ENCODE measurements at regions of chr15 and their contacts with region 1.

Region 1: DNA sequence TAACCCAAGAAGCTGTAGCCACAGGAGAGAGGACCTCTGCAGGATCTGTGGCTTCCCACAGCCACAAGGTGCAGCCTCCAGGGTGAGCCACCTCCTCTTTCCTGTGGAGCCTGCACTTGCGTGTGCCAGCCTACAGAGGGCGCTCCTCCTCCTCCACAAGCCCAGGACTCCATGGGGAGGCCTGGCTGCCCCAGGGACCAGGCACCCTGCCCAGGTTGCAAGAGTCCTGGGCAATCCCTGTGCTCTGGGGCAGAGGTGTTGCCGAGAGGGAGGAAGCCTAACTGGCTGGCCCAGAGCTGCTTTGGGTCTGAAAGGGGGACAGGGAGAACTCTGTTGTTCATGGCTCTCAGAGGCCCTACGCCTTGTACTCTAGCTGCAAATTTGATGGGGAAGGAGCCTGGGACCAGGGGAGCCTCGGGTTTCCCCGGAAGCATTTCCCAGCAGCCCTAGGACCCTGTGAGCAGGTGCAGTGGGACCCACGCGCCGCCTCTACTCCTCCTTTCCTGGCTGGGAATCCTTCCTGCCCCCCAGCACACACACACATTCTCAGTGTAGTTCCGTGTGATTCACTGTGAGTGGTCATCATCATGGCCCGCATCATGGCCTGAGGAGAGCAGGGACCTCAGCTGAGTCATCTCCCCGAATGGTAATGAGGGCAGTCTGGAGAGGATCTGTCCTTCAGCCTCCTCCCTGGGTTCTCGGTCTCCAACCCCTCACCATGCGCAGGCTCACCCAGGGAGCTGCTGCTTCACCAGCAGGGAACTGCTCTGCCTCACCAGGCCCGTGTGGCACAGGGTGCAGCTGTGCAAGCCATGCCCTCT is 24.3 kb downstream of the TBC1D21 start:
- DNase-seq: peak; percentile 84
- H3K4me3 Mint-ChIP-seq: no peak overlapping the region
- H3K27ac Mint-ChIP-seq: no peak overlapping the region
- H3K4me1 Mint-ChIP-seq: peaks cover 13% of the 10 kb centered on the region
- H3K27me3 Mint-ChIP-seq: peaks cover 10% of the 10 kb centered on the region

Region 2: GRCh38 chr15:73914145-73914544 is 16.5 kb after region 1 on chr15:
- CTCF ChIA-PET with region 1: interaction called, 19 read pairs
- POLR2A ChIA-PET with region 1: no interaction called
- DNase-seq: peak; percentile 51
- H3K4me3 Mint-ChIP-seq: no peak overlapping the region
- H3K27ac Mint-ChIP-seq: peak overlapping the region; percentile 81
- H3K4me1 Mint-ChIP-seq: peaks cover 55% of the 10 kb centered on the region
- H3K27me3 Mint-ChIP-seq: no peaks in the 10 kb centered on the region

Measured in activated CD4-positive, alpha-beta memory T cell treated with anti-CD3 and anti-CD28 coated beads, Interleukin-2, amount 10 ng/mL, durations not matched to agents 7 days and 5 days (primary cell).